ENCODE measurements at regions of chr3 and their contacts with region 1.

Region 1: GRCh38 chr3:168684519-168684918 is 588.8 kb upstream of the GOLIM4 start:
- DNase-seq: no peak
- H3K4me3 ChIP-seq: no peak overlapping the region
- H3K27ac ChIP-seq: no peak overlapping the region
- H3K4me1 ChIP-seq: no peaks in the 10 kb centered on the region
- H3K27me3 ChIP-seq: no peaks in the 10 kb centered on the region
- CTCF ChIP-seq: no peak
- POLR2A ChIP-seq: no peak

Region 2: GRCh38 chr3:166934879-166935278 is 1749.6 kb before region 1 on chr3:
- intact Hi-C with region 1: loop called (anchors 10 kb)
- DNase-seq: no peak
- H3K4me3 ChIP-seq: no peak overlapping the region
- H3K27ac ChIP-seq: no peak overlapping the region
- H3K4me1 ChIP-seq: no peaks in the 10 kb centered on the region
- H3K27me3 ChIP-seq: no peaks in the 10 kb centered on the region
- CTCF ChIP-seq: no peak
- POLR2A ChIP-seq: no peak

Region 3: GRCh38 chr3:168952551-168952950 is 268.0 kb after region 1 on chr3:
- intact Hi-C with region 1: no loop called
- DNase-seq: no peak
- H3K4me3 ChIP-seq: no peak overlapping the region
- H3K27ac ChIP-seq: no peak overlapping the region
- H3K4me1 ChIP-seq: no peaks in the 10 kb centered on the region
- H3K27me3 ChIP-seq: no peaks in the 10 kb centered on the region
- CTCF ChIP-seq: no peak
- POLR2A ChIP-seq: no peak

Measured in breast epithelium (tissue), 4 donors.